ENCODE measurements at regions of chr1 and their contacts with region 1.

Region 1: DNA sequence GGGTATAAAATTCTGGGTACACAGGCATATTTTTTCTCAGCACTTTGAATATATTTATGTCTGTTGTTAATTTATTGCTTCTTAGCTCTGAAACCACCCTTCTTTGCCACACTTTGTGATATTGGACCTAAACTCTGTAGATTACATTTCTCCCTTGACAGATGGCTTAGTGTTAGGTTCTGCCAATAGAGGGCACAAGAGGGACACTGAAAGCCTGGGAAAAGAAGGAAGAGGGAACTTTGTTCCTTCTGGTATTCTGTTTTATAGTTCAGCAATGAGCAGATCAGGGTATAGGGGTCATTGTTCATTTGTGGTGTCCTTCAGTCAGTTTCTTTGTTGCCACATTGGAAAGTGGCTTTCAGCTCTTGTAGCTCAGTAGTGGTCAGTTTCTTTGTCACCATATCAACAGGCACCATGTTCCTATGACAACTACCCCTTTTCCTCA is 423.5 kb upstream of the PROX1 start:
- DNase-seq: peak; percentile 34
- H3K4me3 ChIP-seq: no peak overlapping the region
- H3K27ac ChIP-seq: no peak overlapping the region
- H3K4me1 ChIP-seq: no peaks in the 10 kb centered on the region
- H3K27me3 ChIP-seq: no peaks in the 10 kb centered on the region
- CTCF ChIP-seq: peak; percentile 78 to 82

Region 2: DNA sequence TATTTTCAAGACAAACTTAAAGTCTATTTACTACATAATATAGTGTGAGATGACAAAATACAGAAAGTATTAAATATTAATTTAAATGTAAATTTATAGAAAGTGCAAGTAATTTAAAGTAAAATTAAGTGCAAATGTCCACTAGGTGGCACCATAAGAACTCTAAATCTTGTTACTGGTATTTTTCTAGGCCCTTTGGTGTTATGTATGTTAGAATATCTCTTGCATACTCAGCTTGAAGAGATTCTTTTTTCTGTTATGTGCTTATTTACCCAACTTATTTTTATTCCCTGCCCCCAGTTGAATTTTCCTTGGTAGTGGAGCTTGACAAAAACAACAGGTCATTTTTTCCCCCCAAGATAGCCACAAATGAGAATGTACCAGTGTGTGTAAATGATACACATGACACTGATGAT is 441.7 kb before region 1 on chr1:
- CTCF ChIA-PET with region 1: no interaction called
- dilution Hi-C with region 1: no loop called
- in situ Hi-C with region 1: no loop called
- intact Hi-C with region 1: loop called (anchors 5 kb)
- DNase-seq: peak; percentile 24
- H3K4me3 ChIP-seq: no peak overlapping the region
- H3K27ac ChIP-seq: no peak overlapping the region
- H3K4me1 ChIP-seq: peaks cover 21% of the 10 kb centered on the region
- H3K27me3 ChIP-seq: no peaks in the 10 kb centered on the region
- CTCF ChIP-seq: peak; percentile 32 to 43

Region 3: DNA sequence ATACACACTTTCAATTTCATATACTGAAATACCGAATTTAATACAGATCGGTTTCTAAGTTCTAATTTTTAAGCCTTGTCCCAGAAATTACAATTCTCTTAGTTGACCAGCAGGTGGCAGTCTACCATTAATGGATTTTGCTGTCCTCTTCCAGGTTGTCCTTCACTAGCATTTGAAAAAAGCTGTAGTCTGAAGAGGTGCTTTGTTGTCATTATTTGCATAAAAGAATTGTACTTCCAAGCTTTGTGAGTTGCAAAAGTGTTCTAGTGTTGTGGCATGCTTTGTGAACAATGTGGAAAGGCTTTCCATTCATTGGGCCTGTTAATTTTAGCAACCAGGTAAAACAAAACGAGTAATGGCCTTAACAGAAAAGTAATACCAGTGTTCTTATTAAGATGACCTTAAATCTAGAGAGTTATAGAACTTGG is 319.6 kb before region 1 on chr1:
- CTCF ChIA-PET with region 1: no interaction called
- dilution Hi-C with region 1: no loop called
- in situ Hi-C with region 1: no loop called
- intact Hi-C with region 1: loop called (anchors 10 kb)
- DNase-seq: peak; percentile 14
- H3K4me3 ChIP-seq: no peak overlapping the region
- H3K27ac ChIP-seq: no peak overlapping the region
- H3K4me1 ChIP-seq: no peaks in the 10 kb centered on the region
- H3K27me3 ChIP-seq: no peaks in the 10 kb centered on the region
- CTCF ChIP-seq: peak; percentile 65 to 67

Region 4: GRCh38 chr1:213374369-213374768 is 189.9 kb before region 1 on chr1:
- CTCF ChIA-PET with region 1: no interaction called
- dilution Hi-C with region 1: no loop called
- in situ Hi-C with region 1: no loop called
- intact Hi-C with region 1: loop called (anchors 1 kb)
- DNase-seq: peak; percentile 23
- H3K4me3 ChIP-seq: no peak overlapping the region
- H3K27ac ChIP-seq: no peak overlapping the region
- H3K4me1 ChIP-seq: no peaks in the 10 kb centered on the region
- H3K27me3 ChIP-seq: no peaks in the 10 kb centered on the region
- CTCF ChIP-seq: peak; percentile 83 to 90

Region 5: GRCh38 chr1:213512316-213512715 is 51.9 kb before region 1 on chr1:
- CTCF ChIA-PET with region 1: no interaction called
- dilution Hi-C with region 1: no loop called
- in situ Hi-C with region 1: no loop called
- intact Hi-C with region 1: no loop called
- DNase-seq: no peak
- H3K4me3 ChIP-seq: no peak overlapping the region
- H3K27ac ChIP-seq: no peak overlapping the region
- H3K4me1 ChIP-seq: no peaks in the 10 kb centered on the region
- H3K27me3 ChIP-seq: peaks cover 6% of the 10 kb centered on the region
- CTCF ChIP-seq: no peak

Region 6: DNA sequence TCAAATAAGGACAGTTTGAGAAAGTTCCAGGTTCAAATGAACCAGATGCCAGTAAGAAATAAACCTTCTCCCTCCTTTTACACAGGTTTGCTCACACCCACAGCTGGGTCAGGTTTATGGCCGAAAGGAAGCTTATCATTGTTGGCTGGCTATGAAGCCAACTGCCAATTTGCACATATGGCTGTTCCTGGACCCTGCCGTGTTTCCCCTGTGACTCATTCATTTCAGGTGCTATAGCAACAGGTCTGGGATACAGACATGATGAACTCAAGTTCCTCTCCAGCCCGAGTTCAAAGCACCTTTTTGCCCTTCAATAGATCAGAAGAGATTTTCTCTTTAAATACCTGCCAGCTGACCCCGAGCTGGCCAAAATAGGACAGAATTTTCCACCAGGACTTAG is 582.3 kb after region 1 on chr1:
- CTCF ChIA-PET with region 1: no interaction called
- dilution Hi-C with region 1: no loop called
- in situ Hi-C with region 1: loop called in 1 of 2 experiments (anchors 25 kb)
- intact Hi-C with region 1: no loop called
- DNase-seq: peak; percentile 63
- H3K4me3 ChIP-seq: no peak overlapping the region
- H3K27ac ChIP-seq: peak overlapping the region; percentile 11
- H3K4me1 ChIP-seq: peaks cover 17% of the 10 kb centered on the region
- H3K27me3 ChIP-seq: no peaks in the 10 kb centered on the region
- CTCF ChIP-seq: no peak

Region 7: DNA sequence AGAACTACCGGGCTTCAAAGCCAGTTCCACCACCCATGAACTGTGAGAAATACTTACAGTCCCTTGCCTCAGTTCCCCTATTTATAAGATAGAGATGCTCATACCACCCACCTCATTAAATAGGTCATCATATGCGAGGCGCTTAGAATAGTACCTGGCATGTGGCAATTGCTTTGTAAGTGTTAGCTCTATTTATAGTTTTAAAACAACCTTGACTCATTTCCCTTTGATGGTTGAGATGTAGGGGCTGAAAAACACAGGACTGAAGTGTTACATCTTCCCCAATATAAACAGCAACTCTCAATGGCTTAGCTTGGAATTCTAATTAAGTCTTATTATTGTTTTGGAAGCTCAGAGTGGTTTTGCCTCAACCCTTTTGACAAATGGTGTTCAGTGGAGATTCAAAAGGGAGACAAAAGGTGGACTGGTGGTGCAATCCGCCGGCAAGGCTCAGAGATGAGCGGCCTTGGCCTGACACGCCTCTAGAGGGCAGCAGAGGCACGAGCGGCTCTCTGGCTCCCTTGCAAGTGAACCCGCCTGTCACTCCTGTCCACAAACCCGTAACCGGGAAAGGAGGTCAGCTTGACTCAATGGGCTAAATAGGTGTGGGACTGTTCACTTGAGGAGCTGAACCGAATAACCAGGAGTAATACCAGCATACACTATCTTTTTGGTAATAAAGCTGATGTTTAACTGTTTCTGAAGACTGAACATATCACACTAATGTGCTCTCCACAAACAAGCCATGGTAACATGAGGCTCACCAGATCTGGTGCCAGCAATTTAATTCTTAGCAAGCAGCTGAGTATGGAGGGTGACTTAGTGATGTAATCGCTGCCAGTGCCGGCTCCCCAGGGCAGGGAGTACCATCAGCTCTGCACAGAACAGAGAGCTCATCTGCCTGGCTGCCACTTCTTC is 697.2 kb after region 1 on chr1:
- CTCF ChIA-PET with region 1: no interaction called
- dilution Hi-C with region 1: no loop called
- in situ Hi-C with region 1: no loop called
- intact Hi-C with region 1: loop called (anchors 5 kb)
- DNase-seq: peak; percentile 62
- H3K4me3 ChIP-seq: no peak overlapping the region
- H3K27ac ChIP-seq: no peak overlapping the region
- H3K4me1 ChIP-seq: peaks cover 14% of the 10 kb centered on the region
- H3K27me3 ChIP-seq: no peaks in the 10 kb centered on the region
- CTCF ChIP-seq: peak; percentile 96 to 97

Region 8: DNA sequence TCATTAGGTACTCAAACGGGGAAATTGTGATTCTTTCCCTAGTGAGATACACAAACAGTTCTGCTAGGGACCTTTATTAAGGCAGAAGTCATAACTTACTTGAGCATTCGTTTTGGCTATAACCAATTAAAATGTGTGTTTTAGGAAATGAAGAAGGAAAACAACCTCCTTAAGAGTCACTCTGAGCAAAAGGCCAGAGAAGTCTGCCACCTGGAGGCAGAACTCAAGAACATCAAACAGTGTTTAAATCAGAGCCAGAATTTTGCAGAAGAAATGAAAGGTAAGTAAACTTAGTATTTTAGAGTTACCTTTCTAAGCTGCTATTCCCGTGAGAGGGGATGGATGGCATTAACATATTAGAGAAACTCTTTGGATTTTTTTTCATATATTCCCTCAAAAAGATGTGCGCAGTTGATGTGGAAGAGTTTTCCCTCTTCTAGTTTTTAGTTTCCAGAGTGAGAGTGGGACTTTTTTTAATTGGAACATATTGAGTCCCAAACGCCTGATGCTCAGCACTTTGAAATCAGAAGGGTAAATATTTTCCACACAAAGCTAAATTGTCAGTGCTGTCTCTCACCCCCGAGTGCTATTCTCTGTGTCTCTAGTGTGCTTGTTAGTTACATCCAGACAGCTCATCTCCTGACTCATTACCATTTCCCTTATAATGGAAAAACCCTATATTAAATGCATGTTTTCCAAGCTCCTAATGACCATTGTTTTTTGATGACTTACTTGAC is 1073.7 kb after region 1 on chr1:
- CTCF ChIA-PET with region 1: no interaction called
- dilution Hi-C with region 1: no loop called
- in situ Hi-C with region 1: no loop called
- intact Hi-C with region 1: loop called (anchors 10 kb)
- DNase-seq: peak; percentile 46
- H3K4me3 ChIP-seq: no peak overlapping the region
- H3K27ac ChIP-seq: no peak overlapping the region
- H3K4me1 ChIP-seq: peaks cover 5% of the 10 kb centered on the region
- H3K27me3 ChIP-seq: no peaks in the 10 kb centered on the region
- CTCF ChIP-seq: peak; percentile 61 to 81